ENCODE measurements at regions of chr12 and their contacts with region 1.

Region 1: DNA sequence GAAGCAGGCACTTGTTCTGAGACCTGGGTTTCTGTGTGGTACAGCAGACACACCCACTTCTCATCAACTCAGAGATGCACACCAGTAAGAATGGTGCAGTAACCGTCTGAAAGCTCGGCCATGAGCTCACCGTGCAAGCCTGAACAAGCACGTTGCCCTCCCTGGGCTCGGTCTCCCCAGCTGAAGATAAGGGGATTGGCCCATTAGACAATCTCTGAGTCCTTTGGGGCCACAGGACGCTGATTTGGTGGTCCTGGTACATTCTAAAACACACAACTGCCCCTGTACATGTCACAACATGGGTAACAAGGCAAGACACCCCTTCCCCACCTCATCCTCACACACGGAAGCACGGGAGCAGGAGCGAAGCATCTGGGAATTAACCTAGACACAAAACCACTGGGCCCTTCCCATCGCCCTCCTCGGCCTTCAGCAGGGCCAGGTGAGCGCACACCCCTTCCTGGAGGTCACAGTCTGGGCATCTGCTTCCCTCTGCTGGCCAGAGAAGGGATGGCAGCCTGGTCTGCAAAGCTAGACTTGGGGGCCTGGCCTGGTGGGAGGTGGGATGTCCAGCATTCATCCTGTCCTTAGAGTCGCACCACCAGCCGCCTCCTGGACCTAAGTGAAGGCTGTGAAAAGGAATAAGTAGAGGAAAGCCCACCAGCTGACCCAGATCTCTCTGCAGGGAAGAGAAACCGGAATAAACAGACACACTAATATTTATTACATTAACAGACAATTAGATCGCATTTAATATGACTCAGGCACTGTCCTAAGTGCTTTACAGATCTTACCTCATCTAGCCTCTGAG is 18.9 kb upstream of the SMUG1 start:
- DNase-seq: no peak
- ATAC-seq: peak; percentile 98
- H3K4me3 ChIP-seq: no peak overlapping the region
- H3K27ac ChIP-seq: no peak overlapping the region
- H3K4me1 ChIP-seq: no peaks in the 10 kb centered on the region
- H3K27me3 ChIP-seq: peaks cover 0 to 2% of the 10 kb centered on the region in 2 experiments; a peak in 3 of 4 replicates
- CTCF ChIP-seq: peak; percentile 93 to 97 (median 97)
- EP300 ChIP-seq: no peak
- POLR2A ChIP-seq: no peak
- RAD21 ChIP-seq: peak; percentile 87

Region 2: GRCh38 chr12:53999559-54000104 is 208.1 kb before region 1 on chr12:
- CTCF ChIA-PET with region 1: interaction called, 74 read pairs
- POLR2A ChIA-PET with region 1: interaction called, 4 read pairs
- RAD21 ChIA-PET with region 1: interaction called, 3 read pairs
- SMC1A ChIA-PET with region 1: interaction called, 3 read pairs
- in situ Hi-C with region 1: no loop called
- intact Hi-C with region 1: no loop called
- DNase-seq: no peak
- ATAC-seq: no peak
- H3K4me3 ChIP-seq: no peak overlapping the region
- H3K27ac ChIP-seq: no peak overlapping the region
- H3K4me1 ChIP-seq: peaks cover 7% of the 10 kb centered on the region
- H3K27me3 ChIP-seq: peaks cover 21 to 39% of the 10 kb centered on the region in 2 experiments
- CTCF ChIP-seq: no peak
- EP300 ChIP-seq: no peak
- POLR2A ChIP-seq: no peak
- RAD21 ChIP-seq: no peak

Region 3: DNA sequence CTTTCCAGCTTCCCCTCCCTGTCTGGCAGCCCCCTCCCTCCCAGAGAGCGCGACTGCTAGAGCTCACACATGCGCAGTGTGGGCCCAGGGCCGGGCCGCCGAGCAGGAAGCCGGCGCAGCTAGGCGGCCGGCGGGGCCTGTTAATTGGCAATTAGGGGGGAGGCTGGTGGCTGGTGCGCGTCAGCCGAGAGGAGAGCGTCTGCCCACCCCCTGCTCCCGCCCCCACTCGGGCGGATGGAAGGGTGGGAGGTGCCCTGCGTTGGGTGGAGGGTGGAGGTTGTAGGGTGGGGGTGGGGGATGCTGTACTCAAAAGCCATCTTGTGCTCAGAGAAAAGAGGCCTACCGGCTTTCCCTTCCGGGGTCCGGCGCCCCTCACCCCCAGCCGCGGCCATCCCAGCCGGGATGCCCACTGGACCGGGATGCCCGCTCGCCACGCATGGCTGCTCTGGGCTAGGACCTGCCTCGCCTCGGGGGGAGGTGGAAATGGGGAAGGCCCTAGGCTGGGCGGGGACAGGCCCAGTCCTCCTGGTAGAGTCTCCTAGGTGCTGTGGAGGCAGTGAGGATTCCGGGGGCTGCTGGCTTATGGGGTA is 189.7 kb before region 1 on chr12:
- CTCF ChIA-PET with region 1: interaction called, 139 read pairs
- POLR2A ChIA-PET with region 1: interaction called, 5 read pairs
- RAD21 ChIA-PET with region 1: interaction called, 3 read pairs
- SMC1A ChIA-PET with region 1: interaction called, 10 read pairs
- in situ Hi-C with region 1: no loop called
- intact Hi-C with region 1: no loop called
- DNase-seq: peak; percentile 79
- ATAC-seq: peak; percentile 92
- H3K4me3 ChIP-seq: peak overlapping the region; percentile 88
- H3K27ac ChIP-seq: peak overlapping the region; percentile 80
- H3K4me1 ChIP-seq: peaks cover 21% of the 10 kb centered on the region
- H3K27me3 ChIP-seq: peaks cover 8 to 26% of the 10 kb centered on the region in 2 experiments
- CTCF ChIP-seq: no peak
- EP300 ChIP-seq: peak; percentile 36 to 45; a peak in 1 of 4 replicates
- POLR2A ChIP-seq: peak; percentile 79
- RAD21 ChIP-seq: no peak

Region 4: DNA sequence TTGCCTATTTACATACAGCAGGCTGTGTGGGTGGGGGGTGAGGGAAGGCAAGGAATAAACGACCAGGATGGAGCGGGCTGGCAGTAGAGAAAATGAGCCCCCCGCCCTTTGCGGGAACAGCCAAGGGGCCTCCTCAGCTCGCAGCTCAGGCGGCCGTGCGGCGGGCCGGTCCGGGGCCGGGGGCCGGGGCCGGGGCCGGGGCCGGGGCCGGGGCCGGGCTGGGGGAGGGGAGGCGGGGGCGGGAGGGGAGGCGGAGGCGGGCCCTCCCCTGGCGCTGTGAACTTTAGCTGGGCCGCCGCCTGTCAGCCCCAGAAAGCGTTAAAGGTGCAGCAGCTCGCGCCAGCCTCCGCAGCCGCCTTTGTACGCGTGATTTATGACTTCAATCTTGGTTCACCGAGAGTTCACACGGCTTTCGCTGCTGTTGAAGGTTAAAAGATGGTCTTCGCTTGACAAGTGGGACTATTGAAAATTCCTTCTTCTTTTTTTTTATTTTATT is 125.2 kb before region 1 on chr12:
- CTCF ChIA-PET with region 1: no interaction called
- POLR2A ChIA-PET with region 1: no interaction called
- RAD21 ChIA-PET with region 1: no interaction called
- SMC1A ChIA-PET with region 1: no interaction called
- in situ Hi-C with region 1: no loop called
- intact Hi-C with region 1: no loop called
- DNase-seq: no peak
- ATAC-seq: no peak
- H3K4me3 ChIP-seq: peak overlapping the region; percentile 70
- H3K27ac ChIP-seq: peak overlapping the region; percentile 35
- H3K4me1 ChIP-seq: no peaks in the 10 kb centered on the region
- H3K27me3 ChIP-seq: no peaks in the 10 kb centered on the region
- CTCF ChIP-seq: no peak
- EP300 ChIP-seq: no peak
- POLR2A ChIP-seq: 0 out of 2 replicates have a peak, but pooled peaks have one; percentile 26
- RAD21 ChIP-seq: no peak

Region 5: DNA sequence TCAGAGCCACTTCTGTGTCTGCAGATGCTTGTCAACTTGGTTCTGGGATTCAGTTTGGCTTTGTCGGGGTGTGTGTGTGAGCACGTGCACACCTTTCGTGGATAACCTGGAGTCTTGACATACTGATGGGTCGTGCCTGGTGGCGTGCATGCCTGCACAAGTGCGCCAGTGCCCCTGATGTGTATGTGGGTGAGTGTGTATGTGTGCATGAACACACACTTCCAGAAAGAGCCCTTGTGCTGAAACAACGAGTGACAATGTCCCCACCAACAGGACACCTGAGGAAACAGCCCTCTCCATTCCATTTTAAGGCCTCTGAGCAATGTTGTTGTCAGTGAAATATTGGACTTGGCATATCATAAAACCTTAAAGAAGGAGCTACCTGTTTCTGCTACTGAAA is 72.8 kb before region 1 on chr12:
- CTCF ChIA-PET with region 1: interaction called, 16 read pairs
- POLR2A ChIA-PET with region 1: no interaction called
- RAD21 ChIA-PET with region 1: interaction called, 5 read pairs
- SMC1A ChIA-PET with region 1: interaction called, 14 read pairs
- in situ Hi-C with region 1: no loop called
- intact Hi-C with region 1: no loop called
- DNase-seq: no peak
- ATAC-seq: peak; percentile 49; the same call in 2 of the 3 replicates
- H3K4me3 ChIP-seq: no peak overlapping the region
- H3K27ac ChIP-seq: no peak overlapping the region
- H3K4me1 ChIP-seq: no peaks in the 10 kb centered on the region
- H3K27me3 ChIP-seq: peaks cover 2 to 10% of the 10 kb centered on the region in 2 experiments; a peak in 3 of 4 replicates
- CTCF ChIP-seq: peak; percentile 22 to 38 (median 34); a peak in 4 of 6 replicates
- EP300 ChIP-seq: no peak
- POLR2A ChIP-seq: no peak
- RAD21 ChIP-seq: peak; percentile 42

Region 6: GRCh38 chr12:54140588-54141388 is 66.9 kb before region 1 on chr12:
- CTCF ChIA-PET with region 1: interaction called, 16 read pairs
- POLR2A ChIA-PET with region 1: no interaction called
- RAD21 ChIA-PET with region 1: interaction called, 5 read pairs
- SMC1A ChIA-PET with region 1: interaction called, 14 read pairs
- in situ Hi-C with region 1: no loop called
- intact Hi-C with region 1: no loop called
- DNase-seq: no peak
- ATAC-seq: no peak
- H3K4me3 ChIP-seq: no peak overlapping the region
- H3K27ac ChIP-seq: no peak overlapping the region
- H3K4me1 ChIP-seq: no peaks in the 10 kb centered on the region
- H3K27me3 ChIP-seq: peaks cover 5 to 7% of the 10 kb centered on the region in 2 experiments
- CTCF ChIP-seq: no peak
- EP300 ChIP-seq: no peak
- POLR2A ChIP-seq: no peak
- RAD21 ChIP-seq: no peak